Posterior vena cava (tissue), 2 donors: ENCODE measurements at regions of chr2 and their contacts with region 1.

Region 1: DNA sequence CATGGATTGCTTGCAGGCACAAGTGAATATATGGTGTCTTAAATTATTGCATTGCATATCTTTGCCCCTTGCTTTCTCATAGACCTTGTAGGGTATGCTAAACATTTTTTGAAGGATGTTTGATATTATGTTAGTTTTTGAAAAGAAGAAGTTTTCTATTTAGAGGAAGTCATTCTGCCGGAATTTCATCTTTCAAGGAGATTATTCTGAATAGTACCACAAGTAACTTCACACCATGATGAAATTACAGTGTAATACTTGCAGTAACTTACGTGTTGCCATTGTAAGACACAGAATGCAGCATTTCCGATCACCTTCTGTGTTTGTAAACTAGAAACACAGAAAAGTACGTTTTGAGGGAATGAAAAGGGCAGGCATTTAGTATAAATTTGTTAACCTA is 71.9 kb downstream of the ACVR2A start:
- DNase-seq: no peak

Region 2: DNA sequence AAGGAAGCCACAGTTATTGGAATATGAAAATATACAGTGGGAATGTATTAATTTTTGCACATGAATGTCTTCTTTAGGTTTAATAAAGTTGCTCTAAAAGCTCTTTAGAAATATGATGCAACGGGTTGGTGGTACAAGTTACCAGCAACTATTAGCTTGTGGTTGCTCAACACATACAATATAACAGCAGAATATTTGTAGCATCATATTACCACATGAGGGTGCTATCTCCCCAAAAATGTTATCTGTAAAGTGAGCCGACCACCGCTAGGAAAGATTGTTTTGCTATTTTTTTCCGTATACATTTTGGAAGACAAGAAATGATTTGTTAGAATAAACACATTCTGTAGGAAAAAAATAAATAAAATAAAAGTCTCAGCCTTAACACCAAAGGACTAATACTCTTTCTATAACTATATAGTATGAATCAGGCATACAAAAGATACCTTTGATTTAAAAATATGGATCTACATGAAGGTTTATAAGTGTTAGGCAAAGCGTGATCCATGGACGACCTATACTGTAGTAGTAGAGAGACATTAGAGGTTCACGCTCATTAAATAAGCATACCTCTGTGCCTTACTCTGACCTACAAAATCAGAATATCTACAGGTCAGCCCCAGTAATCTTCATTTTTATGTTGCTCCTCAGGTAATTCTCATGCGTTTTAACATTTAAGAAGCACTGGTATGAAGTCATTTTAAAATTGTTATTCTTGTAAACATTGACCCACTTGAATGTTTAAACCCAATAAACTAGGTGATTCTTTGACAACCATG is 1182.5 kb before region 1 on chr2:
- intact Hi-C with region 1: loop called in 1 of 2 experiments (anchors 5 kb)
- DNase-seq: no peak